GM12878 (cell line): ENCODE measurements at regions of chr14 and their contacts with region 1.

Region 1: GRCh38 chr14:68377459-68377858 is 415.4 kb downstream of the ZFP36L1 start:
- DNase-seq: no peak
- ATAC-seq: peak; percentile 28
- H3K4me3 ChIP-seq: no peak overlapping the region
- H3K27ac ChIP-seq: peak overlapping the region; percentile 83
- H3K4me1 ChIP-seq: peaks cover 67% of the 10 kb centered on the region
- H3K27me3 ChIP-seq: no peaks in the 10 kb centered on the region
- CTCF ChIP-seq: no peak
- EP300 ChIP-seq: no peak
- POLR2A ChIP-seq: no peak
- RAD21 ChIP-seq: no peak

Region 2: GRCh38 chr14:68223631-68224030 is 153.8 kb before region 1 on chr14:
- CTCF ChIA-PET with region 1: no interaction called
- POLR2A ChIA-PET with region 1: no interaction called
- RAD21 ChIA-PET with region 1: no interaction called
- SMC1A ChIA-PET with region 1: no interaction called
- in situ Hi-C with region 1: no loop called
- intact Hi-C with region 1: no loop called
- DNase-seq: no peak
- ATAC-seq: no peak
- H3K4me3 ChIP-seq: no peak overlapping the region
- H3K27ac ChIP-seq: no peak overlapping the region
- H3K4me1 ChIP-seq: no peaks in the 10 kb centered on the region
- H3K27me3 ChIP-seq: no peaks in the 10 kb centered on the region
- CTCF ChIP-seq: no peak
- EP300 ChIP-seq: no peak
- POLR2A ChIP-seq: no peak
- RAD21 ChIP-seq: no peak

Region 3: GRCh38 chr14:68292441-68293215 is 84.8 kb before region 1 on chr14:
- CTCF ChIA-PET with region 1: no interaction called
- POLR2A ChIA-PET with region 1: interaction called, 4 read pairs
- RAD21 ChIA-PET with region 1: interaction called, 26 read pairs
- SMC1A ChIA-PET with region 1: interaction called, 15 read pairs
- in situ Hi-C with region 1: no loop called
- intact Hi-C with region 1: no loop called
- DNase-seq: no peak
- ATAC-seq: peak; percentile 43; the same call in 2 of the 3 replicates
- H3K4me3 ChIP-seq: no peak overlapping the region
- H3K27ac ChIP-seq: peak overlapping the region; percentile 76
- H3K4me1 ChIP-seq: peaks cover 49% of the 10 kb centered on the region
- H3K27me3 ChIP-seq: no peaks in the 10 kb centered on the region
- CTCF ChIP-seq: no peak
- EP300 ChIP-seq: no peak
- POLR2A ChIP-seq: no peak
- RAD21 ChIP-seq: no peak

Region 4: GRCh38 chr14:68318828-68319227 is 58.6 kb before region 1 on chr14:
- CTCF ChIA-PET with region 1: interaction called, 17 read pairs
- POLR2A ChIA-PET with region 1: interaction called, 4 read pairs
- RAD21 ChIA-PET with region 1: interaction called, 24 read pairs
- SMC1A ChIA-PET with region 1: interaction called, 151 read pairs
- in situ Hi-C with region 1: no loop called
- intact Hi-C with region 1: no loop called
- DNase-seq: no peak
- ATAC-seq: peak; percentile 49
- H3K4me3 ChIP-seq: no peak overlapping the region
- H3K27ac ChIP-seq: no peak overlapping the region
- H3K4me1 ChIP-seq: peaks cover 54% of the 10 kb centered on the region
- H3K27me3 ChIP-seq: no peaks in the 10 kb centered on the region
- CTCF ChIP-seq: no peak; a peak in 1 of 6 replicates
- EP300 ChIP-seq: peak in 1 of 2 experiments; percentile 23; a peak in 1 of 4 replicates
- POLR2A ChIP-seq: no peak
- RAD21 ChIP-seq: no peak

Region 5: GRCh38 chr14:68359837-68360552 is 17.5 kb before region 1 on chr14:
- CTCF ChIA-PET with region 1: interaction called, 4 read pairs
- POLR2A ChIA-PET with region 1: interaction called, 6 read pairs
- RAD21 ChIA-PET with region 1: interaction called, 46 read pairs
- SMC1A ChIA-PET with region 1: interaction called, 47 read pairs
- in situ Hi-C with region 1: no loop called
- intact Hi-C with region 1: no loop called
- DNase-seq: no peak
- ATAC-seq: peak; percentile 47
- H3K4me3 ChIP-seq: no peak overlapping the region
- H3K27ac ChIP-seq: peak overlapping the region; percentile 82
- H3K4me1 ChIP-seq: peaks cover 33% of the 10 kb centered on the region
- H3K27me3 ChIP-seq: no peaks in the 10 kb centered on the region
- CTCF ChIP-seq: no peak
- EP300 ChIP-seq: no peak
- POLR2A ChIP-seq: no peak
- RAD21 ChIP-seq: no peak

Region 6: GRCh38 chr14:68506021-68506644 is 128.7 kb after region 1 on chr14:
- CTCF ChIA-PET with region 1: interaction called, 3 read pairs
- POLR2A ChIA-PET with region 1: interaction called, 4 read pairs
- RAD21 ChIA-PET with region 1: interaction called, 8 read pairs
- SMC1A ChIA-PET with region 1: interaction called, 14 read pairs
- in situ Hi-C with region 1: no loop called
- intact Hi-C with region 1: no loop called
- DNase-seq: no peak
- ATAC-seq: peak; percentile 32
- H3K4me3 ChIP-seq: peak overlapping the region; percentile 21
- H3K27ac ChIP-seq: peak overlapping the region; percentile 76
- H3K4me1 ChIP-seq: peaks cover 31% of the 10 kb centered on the region
- H3K27me3 ChIP-seq: no peaks in the 10 kb centered on the region
- CTCF ChIP-seq: no peak
- EP300 ChIP-seq: no peak
- POLR2A ChIP-seq: no peak
- RAD21 ChIP-seq: no peak

Region 7: DNA sequence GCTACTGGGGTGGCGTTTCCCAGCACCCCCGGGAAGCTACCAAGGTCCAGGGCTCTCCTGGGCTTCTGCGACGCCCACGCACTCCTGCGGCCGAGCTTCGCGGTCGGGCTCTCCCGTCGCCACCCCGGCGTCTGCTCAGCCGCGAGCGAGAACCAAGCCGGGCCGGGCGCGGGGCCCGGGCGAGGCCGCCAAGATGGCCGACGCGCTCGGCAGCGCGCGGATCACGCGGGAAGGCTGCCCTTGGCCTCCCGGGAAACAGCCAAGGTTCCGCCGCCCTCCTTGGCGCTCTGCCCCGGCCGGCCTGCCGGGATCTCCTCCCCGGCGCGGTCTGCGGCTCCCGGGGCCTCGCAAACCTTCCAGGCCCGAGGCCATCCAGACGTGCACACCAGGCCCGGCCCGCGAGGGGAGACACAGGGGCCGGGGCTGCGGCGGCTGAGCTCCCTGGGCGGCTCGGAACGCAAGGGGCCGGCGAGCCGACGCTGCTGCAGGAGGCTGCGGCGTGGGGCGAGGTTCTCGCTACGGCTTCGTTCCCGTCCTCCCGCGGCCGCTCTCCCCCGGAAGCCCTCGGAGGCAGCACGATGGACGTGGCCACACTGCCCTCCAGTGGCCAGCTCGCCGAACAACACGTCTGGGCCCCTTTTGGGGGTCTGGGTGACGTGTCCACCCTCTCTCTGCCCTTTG is 438.9 kb after region 1 on chr14:
- CTCF ChIA-PET with region 1: interaction called, 15 read pairs
- POLR2A ChIA-PET with region 1: interaction called, 3 read pairs
- RAD21 ChIA-PET with region 1: interaction called, 20 read pairs
- SMC1A ChIA-PET with region 1: interaction called, 24 read pairs
- in situ Hi-C with region 1: no loop called
- intact Hi-C with region 1: loop called (anchors 1 kb)
- DNase-seq: no peak
- ATAC-seq: peak; percentile 64
- H3K4me3 ChIP-seq: peak overlapping the region; percentile 58
- H3K27ac ChIP-seq: peak overlapping the region; percentile 95
- H3K4me1 ChIP-seq: peaks cover 58% of the 10 kb centered on the region
- H3K27me3 ChIP-seq: no peaks in the 10 kb centered on the region
- CTCF ChIP-seq: peak; percentile 89 to 99 (median 92); a peak in 5 of 6 replicates
- EP300 ChIP-seq: 0 out of 4 replicates have a peak, but pooled peaks of 1 of the 2 experiments have one; percentile 12
- POLR2A ChIP-seq: peak; percentile 80
- RAD21 ChIP-seq: peak; percentile 92